Endothelial cell of umbilical vein (primary cell): ENCODE measurements at regions of chr11 and their contacts with region 1.

Region 1: DNA sequence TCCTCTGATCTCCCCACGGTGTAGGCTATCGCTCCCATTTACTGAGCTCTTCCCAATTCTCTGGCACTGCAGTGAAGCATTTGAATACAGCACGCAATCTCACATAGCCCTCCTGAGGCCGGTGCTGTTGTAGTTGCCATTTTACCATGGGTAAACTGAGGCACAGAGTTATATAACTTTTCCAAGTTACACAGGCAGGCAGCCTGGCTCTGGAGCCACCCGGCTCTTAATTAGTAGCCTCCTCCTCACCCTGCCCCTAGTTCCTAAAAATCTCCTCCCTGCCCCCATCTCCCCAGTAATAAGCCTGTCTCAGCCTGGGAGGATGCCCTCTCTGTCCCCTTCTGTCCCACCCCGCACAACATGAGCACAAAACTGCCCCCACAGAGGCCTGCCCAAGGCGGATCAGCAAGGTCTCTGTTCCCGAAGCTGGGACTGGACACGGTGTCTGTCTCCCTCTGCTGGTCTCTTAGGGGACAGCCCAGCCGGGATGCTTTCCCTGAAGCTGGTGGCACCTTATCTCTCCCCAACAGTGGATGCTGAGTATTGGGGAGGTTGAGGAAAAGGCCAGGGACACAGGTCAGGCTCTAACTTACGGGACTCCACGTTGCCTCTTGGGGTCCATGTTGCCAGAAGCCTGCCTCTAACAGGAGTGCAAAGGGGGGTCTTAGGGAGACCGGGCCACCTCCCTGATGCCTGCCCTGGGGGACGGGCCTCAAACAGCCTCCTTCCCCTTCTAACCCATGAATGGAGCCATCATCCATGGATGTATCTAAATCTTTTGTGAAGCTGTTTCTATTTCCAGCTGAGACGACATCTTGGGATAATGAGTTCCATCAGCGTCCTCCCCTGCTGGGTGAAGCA is 9.1 kb upstream of the CLCF1 start:
- DNase-seq: peak; percentile 72
- H3K4me3 ChIP-seq: no peak overlapping the region
- H3K27ac ChIP-seq: no peak overlapping the region
- H3K4me1 ChIP-seq: no peaks in the 10 kb centered on the region
- H3K27me3 ChIP-seq: no peaks in the 10 kb centered on the region
- CTCF ChIP-seq: peak; percentile 97
- POLR2A ChIP-seq: no peak

Region 2: DNA sequence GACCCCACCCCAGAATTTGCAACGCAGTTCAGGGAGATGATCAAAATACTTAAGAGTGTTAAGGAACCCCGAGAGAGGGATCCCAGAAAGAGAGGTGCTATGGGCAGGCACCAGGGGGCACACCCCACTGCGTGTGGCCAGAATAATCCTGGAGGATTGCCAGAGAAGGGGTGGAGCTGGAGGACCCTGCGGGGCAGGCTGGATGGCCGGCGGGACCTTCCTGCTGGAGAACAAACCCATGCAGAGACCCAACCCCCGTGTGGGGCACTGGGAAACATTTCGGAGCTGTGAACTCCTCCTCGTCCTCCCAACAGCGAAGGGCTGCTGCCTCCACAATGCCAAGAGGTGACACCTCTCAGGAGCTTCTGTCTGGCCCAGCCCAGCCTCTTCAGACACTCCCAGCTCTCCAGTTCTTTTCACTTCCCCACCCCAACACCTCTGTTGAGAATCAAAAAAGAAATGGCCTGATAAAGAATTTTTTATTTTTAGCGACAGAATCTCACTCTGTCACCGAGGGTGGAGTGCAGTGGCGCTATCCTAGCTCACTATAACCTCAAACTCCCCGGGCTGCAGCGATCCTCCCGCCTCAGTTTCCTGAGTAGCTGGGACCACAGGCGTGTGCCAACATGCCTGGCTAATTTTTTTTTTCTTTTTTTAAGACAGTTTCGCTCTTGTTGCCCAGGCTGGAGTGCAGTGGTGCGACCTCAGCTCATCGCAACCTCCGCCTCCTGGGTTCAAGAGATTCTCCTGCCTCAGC is 300.3 kb before region 1 on chr11:
- CTCF ChIA-PET with region 1: interaction called, 31 read pairs
- POLR2A ChIA-PET with region 1: no interaction called
- dilution Hi-C with region 1: no loop called
- intact Hi-C with region 1: loop called (anchors 2 kb)
- DNase-seq: peak; percentile 30
- H3K4me3 ChIP-seq: no peak overlapping the region
- H3K27ac ChIP-seq: no peak overlapping the region
- H3K4me1 ChIP-seq: no peaks in the 10 kb centered on the region
- H3K27me3 ChIP-seq: no peaks in the 10 kb centered on the region
- CTCF ChIP-seq: peak in 1 of 2 donors; percentile 18
- POLR2A ChIP-seq: no peak

Region 3: DNA sequence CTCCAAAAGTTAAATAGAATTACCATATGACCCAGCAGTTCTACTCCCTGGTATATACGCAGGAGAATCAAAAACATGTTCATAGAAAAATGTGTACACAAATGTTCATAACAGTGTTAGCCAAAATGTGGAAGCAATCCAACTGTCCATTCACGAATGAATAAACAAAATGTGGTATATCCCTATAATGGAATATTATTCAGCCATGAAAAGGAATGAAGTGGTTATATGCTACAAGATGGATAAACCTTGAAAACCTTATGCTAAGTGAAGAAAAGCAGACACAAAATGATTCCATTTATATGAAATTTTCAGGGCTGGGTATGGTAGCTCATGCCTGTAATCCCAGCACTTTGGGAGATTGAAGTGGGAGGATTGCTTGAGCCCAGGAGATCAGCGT is 45.2 kb before region 1 on chr11:
- CTCF ChIA-PET with region 1: interaction called, 119 read pairs
- POLR2A ChIA-PET with region 1: no interaction called
- dilution Hi-C with region 1: no loop called
- intact Hi-C with region 1: no loop called
- DNase-seq: no peak
- H3K4me3 ChIP-seq: no peak overlapping the region
- H3K27ac ChIP-seq: no peak overlapping the region
- H3K4me1 ChIP-seq: no peaks in the 10 kb centered on the region
- H3K27me3 ChIP-seq: no peaks in the 10 kb centered on the region
- CTCF ChIP-seq: no peak
- POLR2A ChIP-seq: no peak

Region 4: DNA sequence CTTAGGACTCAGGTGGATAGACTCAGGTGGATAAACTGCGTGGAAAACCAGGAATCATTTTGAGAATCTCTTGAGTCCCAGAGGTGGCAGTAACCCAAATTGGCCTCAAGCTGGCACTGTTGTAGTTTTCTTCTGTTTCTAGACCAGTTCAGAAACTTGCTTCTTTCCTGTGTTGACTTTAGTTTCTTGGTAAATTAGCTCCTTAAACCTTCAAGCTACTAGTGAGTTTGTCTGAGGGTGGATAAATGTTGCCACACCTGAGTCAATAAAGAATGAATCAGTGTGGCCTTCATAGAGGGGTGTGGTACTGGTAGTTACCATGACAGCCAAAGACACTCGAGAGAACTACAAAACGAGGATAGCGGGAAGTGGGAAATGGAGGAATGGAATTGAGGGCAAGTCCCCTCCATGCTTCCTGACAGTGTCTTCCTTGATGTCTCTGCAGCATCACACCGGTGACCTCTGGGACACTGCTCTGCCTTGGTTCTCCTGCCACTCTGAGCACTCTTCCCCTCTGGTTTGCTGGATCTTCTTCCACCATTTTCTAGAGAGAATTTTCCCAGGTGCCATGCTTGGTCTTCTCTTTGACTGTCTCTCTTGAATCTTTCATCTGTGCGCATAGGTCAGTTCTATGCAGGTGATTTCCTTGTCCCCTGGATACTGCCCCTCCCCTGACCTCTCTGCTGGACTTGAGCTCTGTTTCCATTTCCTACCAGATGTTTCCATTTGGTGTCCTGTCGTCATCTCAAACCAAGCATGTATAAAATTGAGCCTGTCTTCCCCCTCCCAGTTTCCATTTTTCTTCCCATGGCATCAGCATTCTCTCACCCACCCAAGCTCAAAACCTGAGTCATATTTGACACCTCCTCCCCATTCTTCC is 36.3 kb before region 1 on chr11:
- CTCF ChIA-PET with region 1: interaction called, 1,051 read pairs
- POLR2A ChIA-PET with region 1: no interaction called
- dilution Hi-C with region 1: no loop called
- intact Hi-C with region 1: loop called (anchors 1 kb)
- DNase-seq: peak; percentile 49
- H3K4me3 ChIP-seq: no peak overlapping the region
- H3K27ac ChIP-seq: no peak overlapping the region
- H3K4me1 ChIP-seq: peaks cover 7% of the 10 kb centered on the region
- H3K27me3 ChIP-seq: no peaks in the 10 kb centered on the region
- CTCF ChIP-seq: peak; percentile 70 to 81
- POLR2A ChIP-seq: no peak

Region 5: DNA sequence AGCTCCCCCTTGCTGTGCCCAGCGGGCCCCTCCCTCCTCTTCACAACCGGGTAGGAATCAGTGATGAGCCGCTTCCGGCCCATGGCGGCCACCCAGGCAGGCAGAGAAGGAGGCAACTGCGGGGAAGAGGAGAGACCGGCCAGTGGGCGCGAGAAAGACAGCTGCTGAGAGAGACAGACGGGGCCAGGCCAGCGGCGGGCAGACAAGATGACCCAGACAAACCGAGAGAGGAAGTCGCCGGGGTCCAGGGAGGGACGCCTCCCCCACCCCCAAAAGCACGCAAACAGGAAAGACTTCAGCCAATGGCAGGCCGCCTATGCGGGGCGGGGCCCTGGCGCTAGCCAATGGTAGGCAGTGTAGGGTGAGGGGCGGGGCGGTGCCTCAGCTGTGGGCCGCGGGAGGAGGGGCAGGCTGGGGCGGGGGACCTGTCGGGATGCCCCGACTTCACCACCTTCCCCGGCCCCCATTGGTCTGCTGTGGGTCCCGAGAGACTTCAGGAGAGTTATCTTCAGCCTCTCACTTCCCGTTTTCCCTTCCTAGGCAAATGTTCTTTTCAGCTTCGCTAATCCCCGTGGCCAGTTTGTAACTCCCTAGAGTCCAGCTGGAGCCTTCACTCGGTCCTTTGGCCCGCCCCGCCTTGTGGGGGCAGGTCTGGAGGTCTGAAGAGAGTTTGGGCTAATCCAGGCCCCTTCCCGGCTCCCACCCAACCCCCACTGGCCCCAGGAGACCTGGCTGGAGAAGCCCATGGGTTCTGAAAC is 29.0 kb before region 1 on chr11 and contains the start of gene POLD4:
- CTCF ChIA-PET with region 1: interaction called, 1,051 read pairs
- POLR2A ChIA-PET with region 1: interaction called, 3 read pairs
- dilution Hi-C with region 1: no loop called
- intact Hi-C with region 1: loop called (anchors 1 kb)
- DNase-seq: peak; percentile 97
- H3K4me3 ChIP-seq: peak within 1 kb of the TSS; percentile 19 to 76 (median 53)
- H3K27ac ChIP-seq: peak within 1 kb of the TSS; percentile 78
- H3K4me1 ChIP-seq: peaks cover 47% of the 10 kb centered on the region
- H3K27me3 ChIP-seq: no peaks in the 10 kb centered on the region
- CTCF ChIP-seq: no peak
- POLR2A ChIP-seq: peak; percentile 95
- total RNA-seq, gene POLD4: 50.1 and 66.9 TPM in 2 replicates

Region 6: GRCh38 chr11:67484847-67485311 is 102.4 kb after region 1 on chr11:
- CTCF ChIA-PET with region 1: no interaction called
- POLR2A ChIA-PET with region 1: no interaction called
- dilution Hi-C with region 1: no loop called
- intact Hi-C with region 1: no loop called
- DNase-seq: no peak
- H3K4me3 ChIP-seq: no peak overlapping the region
- H3K27ac ChIP-seq: no peak overlapping the region
- H3K4me1 ChIP-seq: no peaks in the 10 kb centered on the region
- H3K27me3 ChIP-seq: no peaks in the 10 kb centered on the region
- CTCF ChIP-seq: no peak
- POLR2A ChIP-seq: no peak